Activated CD4-positive, alpha-beta T cell treated with anti-CD3 and anti-CD28 coated beads, Interleukin-2, amount 10 ng/mL, durations not matched to agents 24 days and 14 days (primary cell): ENCODE measurements at regions of chr16 and their contacts with region 1.

Region 1: DNA sequence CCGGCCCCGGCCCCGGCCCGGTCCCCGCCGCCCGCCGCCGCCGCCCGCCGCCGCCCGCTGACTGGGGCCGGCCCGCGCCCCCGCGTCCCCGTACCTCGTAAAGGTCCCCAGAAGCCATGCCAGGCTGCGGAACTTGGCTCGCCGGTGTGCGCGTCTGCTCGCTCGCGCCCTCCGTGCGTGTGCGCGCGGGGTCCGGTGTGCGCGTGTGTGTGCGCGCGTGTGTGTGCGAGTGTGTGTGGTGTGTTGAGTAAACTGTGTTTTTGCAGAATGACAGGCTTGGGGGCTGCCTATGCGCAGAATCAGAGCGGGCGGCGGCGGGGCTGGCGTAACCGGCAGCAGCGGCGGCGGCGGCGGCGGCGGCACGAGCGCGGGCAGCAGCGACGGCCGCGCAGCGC is 345 bp downstream of the CDYL2 start:
- DNase-seq: peak; percentile 89
- H3K4me3 Mint-ChIP-seq: peak overlapping the region; percentile 93
- H3K27ac Mint-ChIP-seq: peak overlapping the region; percentile 97
- H3K4me1 Mint-ChIP-seq: peaks cover 45% of the 10 kb centered on the region
- H3K27me3 Mint-ChIP-seq: no peaks in the 10 kb centered on the region

Region 2: DNA sequence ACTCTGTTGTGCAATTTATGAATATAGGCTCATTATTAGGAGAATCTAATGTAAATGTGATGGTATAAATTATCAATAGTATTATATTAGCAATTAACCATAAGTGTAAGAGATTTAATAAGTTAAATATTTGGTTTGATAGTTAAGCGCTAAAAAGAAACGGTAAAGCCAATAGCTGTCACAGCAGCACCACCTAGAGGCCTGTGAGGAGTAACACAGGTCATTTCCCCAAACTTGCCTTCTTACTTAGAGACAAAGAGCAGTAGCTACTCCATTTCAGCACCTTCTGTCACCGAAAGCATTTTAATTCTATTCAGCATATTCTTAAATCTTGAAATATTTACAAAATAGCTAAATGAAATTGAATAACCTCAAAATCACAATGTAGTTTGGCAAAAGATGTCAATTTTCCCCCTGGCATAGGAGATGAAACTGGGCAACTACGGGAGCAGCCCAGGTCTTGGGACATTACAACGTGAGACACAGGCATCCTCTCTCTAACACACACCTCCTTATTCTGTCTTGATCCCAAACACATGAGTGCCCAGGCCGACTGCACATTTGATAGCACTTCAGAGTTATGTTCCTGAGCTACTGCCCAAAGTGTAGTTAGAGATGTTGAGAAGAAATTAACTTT is 277.5 kb before region 1 on chr16:
- intact Hi-C with region 1: loop called (anchors 5 kb)
- DNase-seq: peak; percentile 88
- H3K4me3 Mint-ChIP-seq: no peak overlapping the region
- H3K27ac Mint-ChIP-seq: peak overlapping the region; percentile 17
- H3K4me1 Mint-ChIP-seq: peaks cover 15% of the 10 kb centered on the region
- H3K27me3 Mint-ChIP-seq: peaks cover 11% of the 10 kb centered on the region

Region 3: DNA sequence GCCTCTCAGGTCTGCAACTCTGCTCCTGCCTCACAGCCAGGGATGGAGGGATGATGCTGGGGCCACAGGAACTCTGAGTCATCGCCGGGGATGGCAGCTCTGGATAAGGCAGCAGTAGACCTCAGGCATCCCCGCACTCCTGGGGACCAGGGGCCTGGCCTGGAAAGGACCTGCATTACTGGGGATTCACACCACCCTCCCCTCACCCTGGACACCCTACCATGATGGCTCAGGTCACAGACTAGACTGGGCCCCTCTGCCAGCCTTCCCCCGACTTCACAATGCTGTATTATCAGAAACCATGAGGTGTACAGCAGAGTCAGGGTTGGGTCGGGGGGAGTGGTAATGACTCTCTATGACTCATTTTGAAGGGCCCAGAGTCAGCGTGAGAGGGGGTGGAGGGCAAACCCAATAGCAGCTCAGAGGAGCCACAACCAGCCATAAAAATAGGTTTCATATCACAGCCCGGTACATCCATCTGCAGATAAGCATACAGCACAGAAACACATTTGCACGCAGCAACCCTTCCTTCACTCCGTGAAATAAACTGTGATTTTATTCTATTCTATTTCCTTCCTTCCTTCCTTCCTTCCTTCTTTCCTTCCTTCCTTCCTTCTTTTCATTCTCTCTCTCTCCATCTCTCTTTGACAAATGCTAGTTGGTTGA is 234.5 kb before region 1 on chr16:
- intact Hi-C with region 1: loop called (anchors 1 kb)
- DNase-seq: peak; percentile 89
- H3K4me3 Mint-ChIP-seq: peak overlapping the region; percentile 43
- H3K27ac Mint-ChIP-seq: peak overlapping the region; percentile 81
- H3K4me1 Mint-ChIP-seq: peaks cover 45% of the 10 kb centered on the region
- H3K27me3 Mint-ChIP-seq: no peaks in the 10 kb centered on the region

Region 4: GRCh38 chr16:80691111-80691741 is 112.8 kb before region 1 on chr16:
- intact Hi-C with region 1: loop called (anchors 5 kb)
- DNase-seq: no peak
- H3K4me3 Mint-ChIP-seq: no peak overlapping the region
- H3K27ac Mint-ChIP-seq: no peak overlapping the region
- H3K4me1 Mint-ChIP-seq: peaks cover 64% of the 10 kb centered on the region
- H3K27me3 Mint-ChIP-seq: no peaks in the 10 kb centered on the region

Region 5: GRCh38 chr16:80746231-80746630 is 57.8 kb before region 1 on chr16:
- intact Hi-C with region 1: no loop called
- DNase-seq: no peak
- H3K4me3 Mint-ChIP-seq: no peak overlapping the region
- H3K27ac Mint-ChIP-seq: no peak overlapping the region
- H3K4me1 Mint-ChIP-seq: peaks cover 42% of the 10 kb centered on the region
- H3K27me3 Mint-ChIP-seq: no peaks in the 10 kb centered on the region

Region 6: DNA sequence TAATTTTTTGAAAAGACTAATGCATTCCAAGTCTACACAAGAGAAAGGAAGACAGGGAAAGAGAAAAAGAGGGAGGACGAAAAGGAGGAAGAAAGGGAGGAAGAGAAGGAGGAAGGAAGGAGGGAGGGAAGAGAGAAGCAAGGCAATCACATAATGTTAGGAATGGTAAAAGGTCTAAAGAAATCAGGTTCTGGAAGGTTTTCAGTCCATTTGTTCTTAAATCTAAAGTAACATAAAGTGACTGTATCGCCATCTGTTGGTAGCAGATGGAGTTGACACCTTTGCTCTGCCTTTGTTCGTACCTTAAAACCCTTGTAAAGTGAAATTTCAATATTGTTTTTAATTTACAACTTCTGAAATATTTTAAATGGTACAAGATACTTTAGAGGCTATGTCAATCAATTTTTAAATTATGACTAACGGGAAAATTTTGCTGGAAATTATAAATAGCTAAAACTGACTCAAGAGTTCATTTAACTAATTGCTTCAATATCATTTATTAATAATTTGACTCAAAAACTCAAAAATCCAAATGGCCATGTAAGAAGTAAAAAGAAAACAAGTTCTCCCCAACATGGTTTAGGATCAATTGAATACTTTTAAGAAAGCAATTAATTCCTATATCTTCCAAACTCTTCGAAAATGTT is 20.8 kb after region 1 on chr16:
- intact Hi-C with region 1: loop called (anchors 2 kb)
- DNase-seq: peak; percentile 84
- H3K4me3 Mint-ChIP-seq: no peak overlapping the region
- H3K27ac Mint-ChIP-seq: no peak overlapping the region
- H3K4me1 Mint-ChIP-seq: peaks cover 2% of the 10 kb centered on the region
- H3K27me3 Mint-ChIP-seq: peaks cover 24% of the 10 kb centered on the region

Region 7: DNA sequence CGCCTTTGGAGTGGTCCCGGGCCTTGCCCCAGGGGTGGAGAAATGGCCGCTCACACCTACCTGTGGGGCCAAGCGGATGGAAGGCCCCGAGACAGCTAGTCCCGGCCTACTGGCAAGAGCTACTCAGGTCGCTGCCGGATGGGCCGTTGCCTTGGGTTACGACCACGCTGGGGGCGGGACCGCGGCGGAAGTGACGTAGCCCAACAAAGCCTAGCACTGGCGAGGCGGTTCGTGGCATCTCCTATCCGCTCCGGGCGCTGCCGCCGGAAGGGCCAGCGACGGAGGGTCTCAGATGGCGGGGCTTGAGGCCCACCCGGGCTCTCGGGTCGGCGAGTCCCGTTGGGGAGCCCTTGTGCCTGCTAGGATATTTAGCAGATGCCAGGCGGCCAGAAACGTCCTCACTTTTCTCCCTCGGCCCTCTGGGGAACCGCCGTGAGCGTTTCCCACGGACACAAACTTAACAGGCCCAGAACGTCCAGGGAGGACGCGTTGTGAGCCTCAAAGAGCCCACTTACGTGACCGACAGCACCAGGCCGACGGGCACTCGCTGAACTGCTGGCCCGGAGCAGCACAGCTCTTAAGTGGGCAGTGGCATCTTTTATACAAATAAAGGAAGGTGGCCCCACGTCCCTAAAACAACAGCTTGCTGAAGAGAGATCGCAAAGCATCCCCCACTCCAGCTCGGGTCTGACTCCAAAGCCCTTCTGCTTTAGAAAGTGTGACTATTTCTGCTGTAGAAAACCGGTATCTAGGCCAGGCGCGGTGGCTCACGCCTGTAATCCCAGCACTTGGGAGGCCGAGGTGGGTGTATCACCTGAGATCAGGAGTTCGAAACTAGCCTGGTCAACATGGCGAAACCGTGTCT is 273.3 kb after region 1 on chr16 and contains the start of gene C16orf46:
- intact Hi-C with region 1: loop called (anchors 10 kb)
- DNase-seq: peak; percentile 99
- H3K4me3 Mint-ChIP-seq: no peak within 1 kb of the TSS
- H3K27ac Mint-ChIP-seq: no peak within 1 kb of the TSS
- H3K4me1 Mint-ChIP-seq: no peaks in the 10 kb centered on the region
- H3K27me3 Mint-ChIP-seq: peaks cover 4% of the 10 kb centered on the region
- total RNA-seq, gene C16orf46: 0.54 and 0.86 TPM in 2 replicates

Region 8: DNA sequence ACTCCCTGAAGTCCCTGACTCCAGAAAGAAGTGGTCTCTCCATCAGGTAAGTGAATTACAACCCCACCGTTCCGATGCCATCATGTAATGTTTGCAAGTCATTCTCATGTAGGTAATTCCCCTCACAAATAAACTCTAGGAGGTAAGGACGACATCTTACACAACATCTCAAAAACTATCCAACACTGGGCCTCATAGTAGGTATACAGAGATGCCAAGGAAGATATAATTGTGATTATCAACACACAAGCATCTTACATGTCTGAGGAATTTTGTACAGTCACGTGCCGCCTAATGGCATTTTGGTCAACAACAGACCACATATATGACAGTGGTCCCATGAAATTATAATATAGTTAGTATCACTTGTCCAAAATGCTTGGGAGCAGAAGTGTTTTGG is 284.8 kb after region 1 on chr16:
- intact Hi-C with region 1: no loop called
- DNase-seq: no peak
- H3K4me3 Mint-ChIP-seq: no peak overlapping the region
- H3K27ac Mint-ChIP-seq: no peak overlapping the region
- H3K4me1 Mint-ChIP-seq: peaks cover 2% of the 10 kb centered on the region
- H3K27me3 Mint-ChIP-seq: no peaks in the 10 kb centered on the region